Calu3 (cell line): ENCODE measurements at regions of chr3 and their contacts with region 1.

Region 1: GRCh38 chr3:80190051-80190450 is 422.3 kb upstream of the ROBO1 start:
- DNase-seq: peak; percentile 38
- H3K4me3 Mint-ChIP-seq: peak overlapping the region; percentile 36
- H3K27ac Mint-ChIP-seq: peak overlapping the region; percentile 83
- H3K4me1 Mint-ChIP-seq: peaks cover 38% of the 10 kb centered on the region
- H3K27me3 Mint-ChIP-seq: no peaks in the 10 kb centered on the region
- CTCF ChIP-seq: no peak

Region 2: DNA sequence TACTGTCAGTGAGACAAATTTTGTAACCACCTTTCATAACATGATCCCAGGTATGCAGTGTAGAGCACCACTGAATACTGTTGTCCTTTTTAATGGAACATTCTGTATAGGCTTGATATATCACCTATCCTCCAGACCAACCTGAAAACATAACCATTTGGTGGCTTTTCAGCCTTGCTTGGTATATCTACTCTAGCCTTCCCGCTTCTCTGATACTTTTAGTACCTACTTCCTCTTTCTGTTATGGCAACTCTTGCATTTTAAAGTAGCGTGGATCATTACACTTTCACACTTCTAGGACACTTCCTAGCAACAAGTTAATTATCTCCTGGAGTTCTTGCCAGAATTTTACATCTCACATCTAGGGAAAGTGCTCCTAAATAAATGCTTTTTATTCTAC is 195.7 kb before region 1 on chr3:
- CTCF ChIA-PET with region 1: no interaction called
- intact Hi-C with region 1: loop called (anchors 10 kb)
- DNase-seq: no peak
- H3K4me3 Mint-ChIP-seq: no peak overlapping the region
- H3K27ac Mint-ChIP-seq: no peak overlapping the region
- H3K4me1 Mint-ChIP-seq: peaks cover 5% of the 10 kb centered on the region
- H3K27me3 Mint-ChIP-seq: no peaks in the 10 kb centered on the region
- CTCF ChIP-seq: no peak

Region 3: GRCh38 chr3:80068459-80068858 is 121.6 kb before region 1 on chr3:
- CTCF ChIA-PET with region 1: no interaction called
- intact Hi-C with region 1: loop called (anchors 5 kb)
- DNase-seq: no peak
- H3K4me3 Mint-ChIP-seq: no peak overlapping the region
- H3K27ac Mint-ChIP-seq: no peak overlapping the region
- H3K4me1 Mint-ChIP-seq: peaks cover 22% of the 10 kb centered on the region
- H3K27me3 Mint-ChIP-seq: no peaks in the 10 kb centered on the region
- CTCF ChIP-seq: no peak